WTC11 (cell line): ENCODE measurements at regions of chr11 and their contacts with region 1.

Region 1: GRCh38 chr11:124865921-124866583 is 820 bp downstream of the ROBO3 start:
- DNase-seq: peak; percentile 76
- ATAC-seq: peak; percentile 10; the same call in 1 of the 2 replicates
- H3K4me3 Mint-ChIP-seq: peak overlapping the region; percentile 60
- H3K27ac Mint-ChIP-seq: no peak overlapping the region
- H3K4me1 Mint-ChIP-seq: peaks cover 40% of the 10 kb centered on the region
- H3K27me3 Mint-ChIP-seq: peaks cover 100% of the 10 kb centered on the region
- CTCF ChIP-seq: peak; percentile 87

Region 2: DNA sequence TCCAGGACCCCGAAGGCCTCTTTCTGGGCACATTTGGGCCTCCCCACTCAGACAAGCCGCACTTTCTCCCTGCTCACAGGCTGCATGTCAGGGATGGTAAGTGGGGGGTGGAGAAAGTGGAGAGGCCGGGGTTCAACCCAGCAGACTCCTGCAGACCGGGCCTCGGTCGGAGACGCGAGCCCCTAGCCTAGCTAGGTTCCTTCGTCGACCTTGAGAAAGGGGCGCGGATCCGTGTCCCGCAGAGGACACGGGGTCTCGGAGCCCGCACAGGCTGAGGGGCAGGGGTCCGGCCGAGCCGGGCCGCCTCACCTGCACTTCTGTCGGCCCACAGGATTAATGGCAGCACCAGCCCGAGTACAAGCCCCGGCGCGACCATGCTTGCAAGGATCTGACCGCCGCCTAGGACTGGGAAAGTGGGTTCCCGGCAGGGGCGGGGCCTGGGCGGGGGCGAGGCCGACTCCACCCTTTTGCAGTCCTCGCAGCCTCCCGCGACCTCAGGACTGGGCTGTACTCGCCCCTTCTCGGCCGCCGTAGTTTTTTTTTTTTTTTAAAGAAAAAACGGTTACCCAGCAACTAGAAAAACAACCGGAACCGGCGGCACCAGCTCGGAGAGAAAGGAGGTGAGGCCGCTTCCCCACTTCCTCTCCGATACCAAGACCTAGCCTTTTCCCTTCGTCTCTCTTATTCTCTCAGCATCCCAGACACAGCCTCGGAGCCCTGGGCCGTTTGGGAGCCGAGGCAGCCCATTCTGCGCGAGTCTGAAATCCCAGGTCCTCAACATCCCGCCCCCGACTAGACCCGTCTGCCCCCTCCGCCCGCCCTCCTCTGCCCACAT is 192.5 kb before region 1 on chr11 and contains the starts of genes SIAE and SPA17:
- CTCF ChIA-PET with region 1: interaction called, 27 read pairs
- POLR2A ChIA-PET with region 1: no interaction called
- DNase-seq: peak; percentile 96
- ATAC-seq: peak; percentile 97
- H3K4me3 Mint-ChIP-seq: peak within 1 kb of the TSS; percentile 90
- H3K27ac Mint-ChIP-seq: peak within 1 kb of the TSS; percentile 86
- H3K4me1 Mint-ChIP-seq: peaks cover 11% of the 10 kb centered on the region
- H3K27me3 Mint-ChIP-seq: peaks cover 23% of the 10 kb centered on the region
- CTCF ChIP-seq: no peak
- total RNA-seq, gene SIAE: 4.4 to 4.9 TPM (median 4.8 TPM) in 3 replicates
- total RNA-seq, gene SPA17: 3.5 to 3.8 TPM (median 3.5 TPM) in 3 replicates

Region 3: DNA sequence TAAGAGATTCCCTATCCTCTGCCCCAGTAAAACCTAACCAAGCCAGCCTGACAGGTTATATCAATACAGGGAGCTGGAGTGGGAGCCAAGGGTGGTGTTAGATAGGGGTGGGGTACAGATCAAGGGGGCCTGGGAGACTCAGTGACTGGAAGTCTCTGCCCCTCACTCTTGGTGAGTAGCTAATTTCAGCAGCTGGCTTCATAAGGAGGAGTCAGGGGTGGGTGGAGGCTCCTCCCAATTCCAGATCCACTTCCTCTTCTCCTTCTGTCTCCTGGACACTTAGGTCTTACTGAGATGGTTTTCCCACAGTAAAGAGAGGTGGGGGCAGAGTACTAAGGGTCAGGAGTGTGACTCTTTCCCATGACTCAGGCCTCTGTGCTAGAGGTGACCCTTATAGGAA is 112.8 kb before region 1 on chr11:
- CTCF ChIA-PET with region 1: interaction called, 18 read pairs
- POLR2A ChIA-PET with region 1: no interaction called
- DNase-seq: no peak
- ATAC-seq: no peak
- H3K4me3 Mint-ChIP-seq: no peak overlapping the region
- H3K27ac Mint-ChIP-seq: no peak overlapping the region
- H3K4me1 Mint-ChIP-seq: peaks cover 45% of the 10 kb centered on the region
- H3K27me3 Mint-ChIP-seq: peaks cover 100% of the 10 kb centered on the region
- CTCF ChIP-seq: no peak

Region 4: GRCh38 chr11:124800226-124800929 is 65.7 kb before region 1 on chr11 and contains the start of gene MSANTD2:
- CTCF ChIA-PET with region 1: interaction called, 15 read pairs
- POLR2A ChIA-PET with region 1: no interaction called
- DNase-seq: peak; percentile 75
- ATAC-seq: peak; percentile 84
- H3K4me3 Mint-ChIP-seq: peak within 1 kb of the TSS; percentile 88
- H3K27ac Mint-ChIP-seq: peak within 1 kb of the TSS; percentile 84
- H3K4me1 Mint-ChIP-seq: peaks cover 33% of the 10 kb centered on the region
- H3K27me3 Mint-ChIP-seq: no peaks in the 10 kb centered on the region; the same call in 1 of the 2 replicates
- CTCF ChIP-seq: no peak
- total RNA-seq, gene MSANTD2: 16.5 to 17.5 TPM (median 16.8 TPM) in 3 replicates

Region 5: DNA sequence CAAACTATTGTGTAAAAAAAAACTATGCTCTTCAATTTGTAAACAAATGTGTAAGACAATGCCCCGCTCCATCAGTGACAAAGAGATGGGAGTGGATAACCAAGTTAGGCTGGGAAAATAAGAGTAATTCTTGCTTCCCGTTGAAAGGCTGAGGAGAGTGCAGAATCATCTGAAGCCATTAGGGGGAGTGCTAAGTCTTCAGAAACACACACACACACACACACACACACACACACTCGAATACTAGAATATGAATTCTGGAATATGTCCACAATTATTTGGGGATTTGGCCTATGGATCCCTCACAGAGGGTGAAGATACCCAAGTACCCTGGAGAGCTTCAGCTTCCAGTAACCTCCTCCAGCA is 28.6 kb before region 1 on chr11:
- CTCF ChIA-PET with region 1: interaction called, 66 read pairs
- POLR2A ChIA-PET with region 1: no interaction called
- DNase-seq: no peak
- ATAC-seq: peak; percentile 40
- H3K4me3 Mint-ChIP-seq: no peak overlapping the region
- H3K27ac Mint-ChIP-seq: no peak overlapping the region
- H3K4me1 Mint-ChIP-seq: peaks cover 32% of the 10 kb centered on the region
- H3K27me3 Mint-ChIP-seq: peaks cover 34% of the 10 kb centered on the region
- CTCF ChIP-seq: no peak; the same call in 1 of the 2 replicates

Region 6: DNA sequence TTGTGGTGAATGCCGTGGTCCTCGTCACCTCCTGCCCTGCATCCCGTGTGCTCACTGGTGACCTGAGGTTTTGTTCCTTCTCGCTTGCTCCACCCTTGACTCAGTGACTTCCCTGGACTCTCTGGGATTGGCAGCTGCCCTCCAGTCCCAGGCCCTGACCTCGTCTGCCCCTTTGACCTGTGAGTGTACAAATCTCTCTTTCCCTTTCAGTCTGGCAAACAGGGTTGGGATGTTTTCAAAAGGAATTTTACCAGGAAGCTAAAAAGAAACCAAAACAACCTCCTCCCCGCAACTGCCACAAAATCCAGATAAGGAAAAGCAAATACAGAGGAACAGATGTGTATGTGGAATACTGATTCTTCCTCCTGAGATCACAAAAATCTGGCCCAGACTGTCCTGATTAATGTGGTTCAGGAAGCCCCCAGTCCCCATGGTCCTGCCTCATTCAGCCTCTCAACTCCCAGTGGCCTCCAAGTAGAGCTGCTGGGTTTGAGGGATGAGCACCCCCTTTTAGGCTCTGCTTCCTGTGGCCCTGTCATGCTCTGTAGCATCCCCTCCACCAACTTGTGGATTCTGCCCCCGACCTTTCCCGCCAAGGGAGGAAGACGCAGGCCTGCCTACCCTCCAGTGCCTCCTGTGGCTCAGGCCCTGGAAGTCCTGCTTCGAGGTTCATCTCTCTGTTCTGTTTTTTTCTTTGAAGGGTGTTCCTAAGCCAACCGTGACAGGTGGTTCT is 16.5 kb after region 1 on chr11:
- CTCF ChIA-PET with region 1: interaction called, 40 read pairs
- POLR2A ChIA-PET with region 1: no interaction called
- DNase-seq: no peak
- ATAC-seq: peak; percentile 63
- H3K4me3 Mint-ChIP-seq: no peak overlapping the region
- H3K27ac Mint-ChIP-seq: no peak overlapping the region
- H3K4me1 Mint-ChIP-seq: peaks cover 19% of the 10 kb centered on the region
- H3K27me3 Mint-ChIP-seq: peaks cover 28% of the 10 kb centered on the region
- CTCF ChIP-seq: no peak

Region 7: GRCh38 chr11:125304136-125304535 is 438.1 kb after region 1 on chr11:
- CTCF ChIA-PET with region 1: no interaction called
- POLR2A ChIA-PET with region 1: no interaction called
- DNase-seq: no peak
- ATAC-seq: no peak
- H3K4me3 Mint-ChIP-seq: no peak overlapping the region
- H3K27ac Mint-ChIP-seq: no peak overlapping the region
- H3K4me1 Mint-ChIP-seq: peaks cover 8% of the 10 kb centered on the region
- H3K27me3 Mint-ChIP-seq: no peaks in the 10 kb centered on the region; the same call in 1 of the 2 replicates
- CTCF ChIP-seq: no peak